Right lobe of liver (tissue), 6 donors: ENCODE measurements at regions of chr7 and their contacts with region 1.

Region 1: GRCh38 chr7:44490351-44491200 is at the start of gene NUDCD3:
- DNase-seq: peak; percentile 90 to 91 (median 90)
- ATAC-seq: peak; percentile 96 to 99 (median 98)
- H3K4me3 ChIP-seq: peak within 1 kb of the TSS; percentile 80 to 94 (median 90)
- H3K27ac ChIP-seq: peak within 1 kb of the TSS; percentile 96 to 99 (median 98)
- H3K4me1 ChIP-seq: peaks cover 0 to 32% (median 4%) of the 10 kb centered on the region in 4 donors
- H3K27me3 ChIP-seq: no peaks in the 10 kb centered on the region
- CTCF ChIP-seq: peak in 2 of 4 donors; percentile 3 to 21
- POLR2A ChIP-seq: peak; percentile 54
- total RNA-seq, gene NUDCD3: 24.4 to 47.1 (median 42.5) TPM

Region 2: GRCh38 chr7:44565097-44565794 is 74.7 kb after region 1 on chr7:
- intact Hi-C with region 1: loop called (anchors 10 kb)
- DNase-seq: peak; percentile 75 to 82 (median 79)
- ATAC-seq: peak; percentile 74 to 83 (median 80)
- H3K4me3 ChIP-seq: no peak overlapping the region
- H3K27ac ChIP-seq: peak overlapping the region in 1 of 3 donors; percentile 88
- H3K4me1 ChIP-seq: peaks cover 0 to 30% (median 9%) of the 10 kb centered on the region in 4 donors
- H3K27me3 ChIP-seq: no peaks in the 10 kb centered on the region
- CTCF ChIP-seq: peak; percentile 97 to 99 (median 98)
- POLR2A ChIP-seq: no peak

Region 3: DNA sequence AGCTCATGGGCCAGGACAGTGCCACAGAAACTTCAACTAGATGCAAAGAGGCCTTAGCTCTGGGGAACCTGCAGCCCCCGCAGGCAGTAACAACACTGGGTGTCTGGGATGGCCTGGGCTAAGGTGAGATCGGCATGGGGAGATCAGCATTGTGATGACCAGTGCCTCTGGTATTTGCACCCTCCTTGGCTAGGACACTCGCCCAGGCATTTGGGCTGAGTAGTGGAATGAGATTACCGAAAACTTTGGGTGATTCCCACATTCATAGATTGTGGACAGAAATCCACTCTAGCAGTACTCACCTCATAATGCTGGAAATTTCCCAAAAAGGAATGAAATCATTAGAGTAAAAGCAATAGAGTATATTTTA is 187.5 kb after region 1 on chr7:
- intact Hi-C with region 1: no loop called
- DNase-seq: no peak
- ATAC-seq: peak in 1 of 4 donors; percentile 23
- H3K4me3 ChIP-seq: no peak overlapping the region
- H3K27ac ChIP-seq: peak overlapping the region; percentile 40 to 74 (median 41)
- H3K4me1 ChIP-seq: peaks cover 5 to 31% (median 12%) of the 10 kb centered on the region in 4 donors
- H3K27me3 ChIP-seq: no peaks in the 10 kb centered on the region
- CTCF ChIP-seq: no peak
- POLR2A ChIP-seq: no peak